ENCODE measurements at regions of chr17 and their contacts with region 1.

Region 1: DNA sequence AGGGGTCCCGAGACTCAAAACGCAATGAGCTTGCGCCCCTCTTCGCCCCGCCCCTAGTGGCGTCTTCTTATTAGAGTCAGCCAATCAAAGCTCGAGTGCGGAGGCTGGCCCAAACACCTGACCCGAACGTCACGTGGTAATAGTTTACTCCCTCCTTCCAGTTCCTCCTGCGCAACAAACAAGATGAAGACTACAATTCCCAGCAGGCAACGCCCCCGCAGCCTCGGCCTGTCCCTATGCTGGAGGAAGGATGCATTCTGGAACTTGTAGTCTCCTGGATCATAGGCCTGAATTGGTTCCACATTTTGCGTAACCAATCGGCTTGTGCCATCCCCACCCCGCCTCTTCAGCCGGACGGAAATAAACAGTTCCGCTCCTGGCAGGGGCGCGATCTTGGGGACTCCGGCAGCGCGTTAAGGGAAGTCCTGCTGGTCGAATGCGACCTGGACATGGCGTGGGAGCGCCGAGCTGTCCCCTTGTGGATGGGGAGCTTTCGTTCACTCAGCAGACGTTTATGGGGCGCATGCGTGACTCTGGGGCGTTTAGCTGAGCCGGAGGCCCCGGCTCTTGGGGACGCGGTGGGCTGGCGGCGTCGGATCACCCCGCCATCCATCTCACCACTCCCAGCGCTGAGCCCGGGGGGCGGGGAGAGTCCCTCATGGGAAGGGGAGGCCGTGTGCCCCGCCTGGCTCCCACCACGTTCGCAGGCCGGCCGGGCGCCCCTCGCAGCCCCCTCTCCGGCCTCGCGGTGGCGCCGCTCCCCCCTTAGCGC is at the start of gene WBP2:
- DNase-seq: peak; percentile 89
- ATAC-seq: peak; percentile 90
- H3K4me3 Mint-ChIP-seq: no peak within 1 kb of the TSS
- H3K27ac Mint-ChIP-seq: peak within 1 kb of the TSS; percentile 90
- H3K4me1 Mint-ChIP-seq: peaks cover 25% of the 10 kb centered on the region
- H3K27me3 Mint-ChIP-seq: no peaks in the 10 kb centered on the region
- total RNA-seq, gene WBP2: 107 TPM

Region 2: DNA sequence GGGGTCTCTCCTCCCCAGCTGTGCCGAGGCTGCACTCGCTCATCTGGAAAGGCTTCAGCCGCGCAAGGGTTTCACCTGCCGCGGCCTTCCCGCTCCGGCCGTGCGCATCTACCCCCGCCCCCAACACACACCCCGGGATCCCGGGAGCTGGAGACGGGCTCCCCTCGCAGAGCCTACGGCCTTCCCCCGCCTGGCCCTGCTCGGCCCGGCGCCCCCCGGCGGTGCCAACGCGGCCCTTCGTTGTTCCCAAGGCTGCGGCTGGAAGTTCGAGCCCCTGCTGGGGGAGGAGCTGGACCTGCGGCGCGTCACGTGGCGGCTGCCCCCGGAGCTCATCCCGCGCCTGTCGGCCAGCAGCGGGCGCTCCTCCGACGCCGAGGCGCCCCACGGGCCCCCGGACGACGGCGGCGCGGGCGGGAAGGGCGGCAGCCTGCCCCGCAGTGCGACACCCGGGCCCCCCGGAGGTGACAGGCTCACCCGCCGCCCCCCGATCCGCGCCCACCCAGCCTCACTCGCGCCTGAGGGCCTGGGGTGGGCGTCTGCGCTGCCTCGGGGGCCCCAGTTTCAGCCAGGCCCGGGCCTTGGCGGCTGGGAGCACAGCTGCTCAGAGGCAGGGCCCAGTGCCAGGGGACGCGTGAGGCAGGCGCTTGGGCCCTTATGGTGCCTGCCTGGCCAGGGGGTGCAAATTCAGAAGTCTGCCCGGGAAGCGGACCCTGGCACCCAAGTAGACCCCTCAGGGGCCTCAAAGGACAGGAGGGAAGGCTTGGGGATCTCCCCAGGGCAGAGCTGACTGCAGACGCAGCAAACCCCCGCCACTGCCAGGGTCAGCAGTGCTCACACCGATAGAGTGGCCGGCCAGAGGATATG is 101.8 kb before region 1 on chr17:
- POLR2A ChIA-PET with region 1: interaction called, 11 read pairs
- DNase-seq: peak; percentile 89
- ATAC-seq: peak; percentile 81
- H3K4me3 Mint-ChIP-seq: peak overlapping the region; percentile 54
- H3K27ac Mint-ChIP-seq: no peak overlapping the region
- H3K4me1 Mint-ChIP-seq: peaks cover 8% of the 10 kb centered on the region
- H3K27me3 Mint-ChIP-seq: no peaks in the 10 kb centered on the region

Region 3: GRCh38 chr17:75779231-75779986 is 76.1 kb before region 1 on chr17:
- POLR2A ChIA-PET with region 1: interaction called, 126 read pairs
- DNase-seq: peak; percentile 93
- ATAC-seq: peak; percentile 76
- H3K4me3 Mint-ChIP-seq: peak overlapping the region; percentile 99
- H3K27ac Mint-ChIP-seq: peak overlapping the region; percentile 99
- H3K4me1 Mint-ChIP-seq: peaks cover 42% of the 10 kb centered on the region
- H3K27me3 Mint-ChIP-seq: no peaks in the 10 kb centered on the region

Region 4: DNA sequence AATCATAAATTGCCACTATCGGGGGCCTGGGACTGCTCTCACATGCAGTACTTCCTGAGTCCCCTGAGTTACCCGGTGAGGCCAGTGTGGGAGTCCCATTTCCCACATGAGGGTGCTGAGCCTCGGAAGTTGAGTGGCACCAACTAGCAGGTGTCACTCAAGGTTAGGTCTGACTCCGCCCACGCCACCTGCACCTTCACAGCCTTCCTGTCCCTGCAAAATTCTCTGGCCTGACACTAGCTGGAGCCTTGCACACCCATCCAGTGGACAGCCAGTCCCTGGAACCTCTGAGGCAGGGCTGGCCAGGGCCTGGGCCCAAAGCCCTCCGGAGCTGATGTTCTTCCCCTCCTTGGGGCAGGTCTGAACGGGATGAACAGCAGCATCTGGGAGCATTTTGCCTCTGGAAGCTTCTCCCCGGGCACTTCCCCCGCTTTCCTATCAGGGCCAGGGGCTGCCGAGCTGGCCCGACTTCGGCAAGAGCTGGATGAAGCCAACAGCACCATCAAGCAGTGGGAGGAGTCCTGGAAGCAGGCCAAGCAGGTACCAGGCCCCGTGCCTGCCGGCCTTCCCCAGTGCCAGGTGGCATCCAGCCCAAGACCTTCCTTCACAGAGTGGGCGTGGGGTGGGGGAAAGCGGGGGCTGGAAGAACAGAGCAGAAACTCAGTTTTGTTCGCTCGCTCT is 33.2 kb before region 1 on chr17:
- POLR2A ChIA-PET with region 1: interaction called, 12 read pairs
- DNase-seq: no peak
- ATAC-seq: peak; percentile 50
- H3K4me3 Mint-ChIP-seq: no peak overlapping the region
- H3K27ac Mint-ChIP-seq: peak overlapping the region; percentile 87
- H3K4me1 Mint-ChIP-seq: peaks cover 17% of the 10 kb centered on the region
- H3K27me3 Mint-ChIP-seq: no peaks in the 10 kb centered on the region

Region 5: DNA sequence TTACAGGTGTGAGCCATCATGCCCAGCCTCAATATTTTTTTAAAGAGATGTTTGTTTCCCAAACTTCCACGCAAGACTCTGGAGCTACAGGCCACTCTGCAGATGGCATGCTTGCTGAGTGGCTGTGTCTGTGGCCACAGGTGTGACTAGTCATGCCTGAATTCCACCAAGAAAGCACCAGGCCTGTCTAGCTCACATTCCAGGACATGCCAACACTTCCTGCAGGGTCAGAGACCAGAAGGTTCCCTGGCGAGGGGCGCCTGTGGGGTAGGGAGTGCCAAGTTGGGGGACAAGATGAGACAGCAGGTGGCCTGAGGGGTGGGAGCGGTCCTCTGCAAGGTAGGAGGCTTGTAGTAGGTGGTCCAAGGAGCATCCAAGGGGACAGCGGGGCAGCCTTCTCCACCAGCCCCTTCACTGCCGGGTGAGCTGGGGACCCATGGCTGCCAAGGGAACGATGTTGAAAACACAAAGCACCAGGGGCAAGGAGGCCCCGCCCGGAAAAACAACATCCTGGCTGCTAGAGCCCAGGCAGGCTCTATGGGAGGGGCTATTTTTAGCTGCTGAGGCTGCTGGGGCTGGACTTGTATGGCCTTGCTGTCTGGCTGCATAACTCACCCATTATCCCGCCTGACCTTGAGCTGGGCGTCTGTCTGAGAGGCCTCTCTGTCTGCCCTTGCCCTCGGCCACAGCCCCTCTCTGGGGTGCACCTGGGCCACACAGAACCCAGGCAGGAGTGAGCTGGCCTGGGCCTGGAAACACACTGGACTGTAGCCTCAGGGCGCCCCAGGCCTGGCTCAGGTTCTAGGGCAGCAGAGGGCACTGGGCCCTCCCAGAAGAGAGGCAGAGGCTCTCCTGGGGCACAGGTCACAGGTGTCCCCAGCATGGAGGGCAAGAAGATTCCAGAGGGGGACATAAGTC is 17.2 kb after region 1 on chr17:
- POLR2A ChIA-PET with region 1: interaction called, 41 read pairs
- DNase-seq: peak; percentile 66
- ATAC-seq: peak; percentile 51
- H3K4me3 Mint-ChIP-seq: peak overlapping the region; percentile 49
- H3K27ac Mint-ChIP-seq: peak overlapping the region; percentile 89
- H3K4me1 Mint-ChIP-seq: peaks cover 25% of the 10 kb centered on the region
- H3K27me3 Mint-ChIP-seq: no peaks in the 10 kb centered on the region

Region 6: DNA sequence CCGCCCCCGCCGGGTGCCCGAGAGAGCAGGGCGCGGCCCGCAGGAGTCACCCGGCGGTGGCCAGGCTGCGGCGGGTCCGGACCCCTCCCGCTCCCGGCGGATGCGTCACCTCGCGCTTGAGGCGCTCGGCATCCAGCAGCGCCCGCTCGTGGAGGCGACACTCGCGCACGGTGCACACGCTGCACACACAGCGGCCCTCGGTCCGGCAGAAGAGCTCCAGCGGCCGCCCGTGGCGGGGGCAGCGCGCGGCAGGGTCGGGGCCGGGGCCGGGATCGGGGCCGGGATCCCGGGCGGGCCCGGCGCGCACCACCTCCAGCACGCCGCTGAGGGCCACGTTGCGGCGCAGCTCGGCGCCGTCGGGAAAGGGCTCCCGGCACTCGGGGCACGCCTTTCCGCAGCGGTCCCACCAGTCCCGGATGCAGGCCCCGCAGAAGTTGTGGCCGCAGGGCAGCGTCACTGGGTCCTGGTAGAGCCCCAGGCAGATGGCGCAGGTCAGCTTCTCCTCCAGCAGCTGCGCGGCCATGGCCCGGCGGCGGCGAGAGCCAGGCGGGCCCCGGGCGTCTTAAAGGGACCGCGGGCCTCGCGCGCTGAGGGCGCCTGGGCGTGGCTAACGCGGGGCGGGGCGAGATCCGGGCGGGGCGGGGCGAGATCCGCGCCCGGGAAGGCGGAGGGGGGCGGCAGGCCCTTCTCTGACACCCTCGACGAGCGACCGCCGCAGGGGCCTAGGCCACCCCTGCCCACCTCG is 41.1 kb after region 1 on chr17 and contains the start of gene TRIM65:
- POLR2A ChIA-PET with region 1: interaction called, 20 read pairs
- DNase-seq: peak; percentile 89
- ATAC-seq: peak; percentile 87
- H3K4me3 Mint-ChIP-seq: peak within 1 kb of the TSS; percentile 87
- H3K27ac Mint-ChIP-seq: peak within 1 kb of the TSS; percentile 86
- H3K4me1 Mint-ChIP-seq: peaks cover 18% of the 10 kb centered on the region
- H3K27me3 Mint-ChIP-seq: no peaks in the 10 kb centered on the region
- total RNA-seq, gene TRIM65: 35.3 to 36.3 TPM

Region 7: GRCh38 chr17:75908201-75908600 is 52.7 kb after region 1 on chr17:
- POLR2A ChIA-PET with region 1: no interaction called
- DNase-seq: no peak
- ATAC-seq: no peak
- H3K4me3 Mint-ChIP-seq: no peak overlapping the region
- H3K27ac Mint-ChIP-seq: no peak overlapping the region
- H3K4me1 Mint-ChIP-seq: peaks cover 16% of the 10 kb centered on the region
- H3K27me3 Mint-ChIP-seq: no peaks in the 10 kb centered on the region